ENCODE measurements at regions of chr11 and their contacts with region 1.

Region 1: GRCh38 chr11:10857709-10858438 is at the start of gene ZBED5:
- DNase-seq: peak; percentile 97
- H3K4me3 Mint-ChIP-seq: peak within 1 kb of the TSS; percentile 87
- H3K27ac Mint-ChIP-seq: peak within 1 kb of the TSS; percentile 97
- H3K4me1 Mint-ChIP-seq: peaks cover 6% of the 10 kb centered on the region
- H3K27me3 Mint-ChIP-seq: no peaks in the 10 kb centered on the region
- CTCF ChIP-seq: no peak
- total RNA-seq, gene ZBED5: 38.9 and 53.3 TPM in 2 replicates

Region 2: GRCh38 chr11:10803676-10804075 is 54.2 kb before region 1 on chr11:
- CTCF ChIA-PET with region 1: interaction called, 4 read pairs
- POLR2A ChIA-PET with region 1: interaction called, 301 read pairs
- intact Hi-C with region 1: loop called (anchors 1 kb)
- DNase-seq: no peak
- H3K4me3 Mint-ChIP-seq: no peak overlapping the region
- H3K27ac Mint-ChIP-seq: no peak overlapping the region
- H3K4me1 Mint-ChIP-seq: peaks cover 4% of the 10 kb centered on the region
- H3K27me3 Mint-ChIP-seq: no peaks in the 10 kb centered on the region
- CTCF ChIP-seq: no peak

Region 3: DNA sequence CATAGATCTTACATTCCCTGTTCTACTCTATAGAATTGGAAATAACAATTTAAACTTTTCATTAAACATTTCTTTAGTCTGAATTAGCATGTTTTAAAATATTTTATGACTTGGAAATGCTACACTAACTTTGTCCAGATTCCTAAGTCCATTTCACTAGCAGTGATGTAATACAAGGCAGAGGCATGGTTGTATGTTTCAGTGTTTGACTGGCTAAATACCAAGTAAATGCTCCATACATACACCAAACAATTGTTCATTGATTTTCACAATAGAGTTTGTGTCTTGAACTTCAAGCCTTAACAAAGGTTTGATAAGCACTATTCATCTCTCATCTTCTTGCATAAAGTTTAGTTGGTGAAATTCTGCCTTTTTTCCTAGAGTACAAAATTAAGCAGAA is 13.5 kb before region 1 on chr11:
- CTCF ChIA-PET with region 1: interaction called, 5 read pairs
- POLR2A ChIA-PET with region 1: interaction called, 34 read pairs
- intact Hi-C with region 1: no loop called
- DNase-seq: no peak
- H3K4me3 Mint-ChIP-seq: no peak overlapping the region
- H3K27ac Mint-ChIP-seq: no peak overlapping the region
- H3K4me1 Mint-ChIP-seq: no peaks in the 10 kb centered on the region
- H3K27me3 Mint-ChIP-seq: no peaks in the 10 kb centered on the region
- CTCF ChIP-seq: no peak

Region 4: DNA sequence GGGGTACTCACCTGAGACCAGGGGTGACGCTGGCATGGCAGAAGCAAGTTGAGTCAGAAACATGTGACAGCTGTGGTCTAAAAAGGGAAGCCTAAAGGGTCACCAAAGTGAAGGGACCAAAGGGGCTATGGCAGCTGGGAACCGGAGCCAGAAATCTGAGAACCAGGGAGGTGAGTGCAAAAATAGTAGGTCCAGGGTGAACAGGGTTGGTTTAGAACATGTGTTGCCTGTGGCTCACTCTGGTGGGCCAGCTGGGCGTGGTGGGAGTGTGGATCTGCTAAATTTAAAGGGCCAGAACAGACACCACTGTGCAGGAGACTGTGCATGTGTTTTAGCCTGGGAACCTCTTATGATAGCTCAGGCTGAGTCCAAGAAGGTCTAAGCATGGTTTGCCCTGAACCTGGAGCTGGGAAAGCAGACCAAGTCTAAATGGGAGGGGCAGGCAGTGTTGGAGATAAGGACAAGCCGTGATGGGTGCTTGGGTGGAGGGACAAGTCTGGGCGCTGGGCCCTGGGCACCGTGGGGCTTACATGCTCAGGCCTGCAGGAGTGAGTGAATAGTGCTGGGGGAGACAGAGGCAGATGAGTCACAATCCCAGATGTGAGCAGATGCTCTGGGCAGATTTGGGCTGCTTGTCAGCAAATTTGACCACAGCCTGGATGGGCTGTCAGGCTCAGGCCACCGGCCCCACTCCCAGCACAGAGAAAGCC is 41.4 kb after region 1 on chr11:
- CTCF ChIA-PET with region 1: interaction called, 4 read pairs
- POLR2A ChIA-PET with region 1: interaction called, 326 read pairs
- intact Hi-C with region 1: loop called (anchors 1 kb)
- DNase-seq: peak; percentile 96
- H3K4me3 Mint-ChIP-seq: peak overlapping the region; percentile 58
- H3K27ac Mint-ChIP-seq: peak overlapping the region; percentile 98
- H3K4me1 Mint-ChIP-seq: peaks cover 62% of the 10 kb centered on the region
- H3K27me3 Mint-ChIP-seq: no peaks in the 10 kb centered on the region
- CTCF ChIP-seq: no peak

Region 5: GRCh38 chr11:10925144-10925926 is 67.5 kb after region 1 on chr11:
- CTCF ChIA-PET with region 1: interaction called, 4 read pairs
- POLR2A ChIA-PET with region 1: interaction called, 31 read pairs
- intact Hi-C with region 1: no loop called
- DNase-seq: no peak
- H3K4me3 Mint-ChIP-seq: no peak overlapping the region
- H3K27ac Mint-ChIP-seq: no peak overlapping the region
- H3K4me1 Mint-ChIP-seq: no peaks in the 10 kb centered on the region
- H3K27me3 Mint-ChIP-seq: no peaks in the 10 kb centered on the region
- CTCF ChIP-seq: no peak

Region 6: DNA sequence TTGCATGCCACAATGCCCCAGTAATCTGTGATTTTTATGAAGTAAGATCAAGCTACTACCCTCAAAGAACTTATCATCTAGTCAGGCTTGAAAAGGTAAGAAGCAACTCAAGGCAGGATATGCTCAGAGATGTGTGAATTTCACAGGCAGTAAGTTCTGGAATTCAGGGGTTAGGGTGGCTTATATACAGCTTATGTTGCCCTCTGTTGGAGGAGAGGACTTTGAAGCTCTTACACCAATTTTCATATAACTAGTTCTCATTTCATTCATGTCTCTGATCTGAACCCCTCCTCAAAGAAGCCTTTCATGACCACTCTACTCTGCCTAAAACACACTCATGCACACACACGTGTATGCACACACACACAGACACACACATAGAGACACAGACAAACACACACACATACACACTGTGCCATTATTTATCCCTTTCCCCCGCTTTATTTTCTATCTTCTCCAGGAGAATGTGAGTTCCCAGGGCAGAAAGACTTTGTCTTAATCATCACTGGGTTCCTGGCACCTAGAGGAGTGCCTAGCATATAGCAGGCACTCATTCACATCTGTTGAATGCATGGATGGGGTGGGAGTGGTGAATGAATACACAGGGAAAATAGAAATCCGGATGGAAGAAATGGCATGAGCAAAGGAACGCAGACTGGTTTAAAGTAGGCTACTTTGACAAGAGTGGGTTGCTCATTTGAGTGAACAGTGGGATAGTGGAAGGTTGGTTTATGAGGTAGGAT is 220.6 kb after region 1 on chr11:
- CTCF ChIA-PET with region 1: no interaction called
- POLR2A ChIA-PET with region 1: no interaction called
- intact Hi-C with region 1: no loop called
- DNase-seq: peak; percentile 13
- H3K4me3 Mint-ChIP-seq: no peak overlapping the region
- H3K27ac Mint-ChIP-seq: no peak overlapping the region
- H3K4me1 Mint-ChIP-seq: peaks cover 5% of the 10 kb centered on the region
- H3K27me3 Mint-ChIP-seq: peaks cover 75% of the 10 kb centered on the region
- CTCF ChIP-seq: no peak

Region 7: GRCh38 chr11:11279956-11280689 is 422.2 kb after region 1 on chr11:
- CTCF ChIA-PET with region 1: no interaction called
- POLR2A ChIA-PET with region 1: no interaction called
- intact Hi-C with region 1: no loop called
- DNase-seq: no peak
- H3K4me3 Mint-ChIP-seq: no peak overlapping the region
- H3K27ac Mint-ChIP-seq: no peak overlapping the region
- H3K4me1 Mint-ChIP-seq: no peaks in the 10 kb centered on the region
- H3K27me3 Mint-ChIP-seq: no peaks in the 10 kb centered on the region
- CTCF ChIP-seq: no peak

Region 8: GRCh38 chr11:11841723-11842420 is 984.0 kb after region 1 on chr11 and contains the start of gene USP47:
- CTCF ChIA-PET with region 1: no interaction called
- POLR2A ChIA-PET with region 1: interaction called, 10 read pairs
- intact Hi-C with region 1: no loop called
- DNase-seq: peak; percentile 87
- H3K4me3 Mint-ChIP-seq: no peak within 1 kb of the TSS
- H3K27ac Mint-ChIP-seq: no peak within 1 kb of the TSS
- H3K4me1 Mint-ChIP-seq: no peaks in the 10 kb centered on the region
- H3K27me3 Mint-ChIP-seq: no peaks in the 10 kb centered on the region
- CTCF ChIP-seq: peak; percentile 58
- total RNA-seq, gene USP47: 41.6 and 46.1 TPM in 2 replicates

Measured in MCF 10A (cell line).